A673 (cell line): ENCODE measurements at regions of chr15 and their contacts with region 1.

Region 1: DNA sequence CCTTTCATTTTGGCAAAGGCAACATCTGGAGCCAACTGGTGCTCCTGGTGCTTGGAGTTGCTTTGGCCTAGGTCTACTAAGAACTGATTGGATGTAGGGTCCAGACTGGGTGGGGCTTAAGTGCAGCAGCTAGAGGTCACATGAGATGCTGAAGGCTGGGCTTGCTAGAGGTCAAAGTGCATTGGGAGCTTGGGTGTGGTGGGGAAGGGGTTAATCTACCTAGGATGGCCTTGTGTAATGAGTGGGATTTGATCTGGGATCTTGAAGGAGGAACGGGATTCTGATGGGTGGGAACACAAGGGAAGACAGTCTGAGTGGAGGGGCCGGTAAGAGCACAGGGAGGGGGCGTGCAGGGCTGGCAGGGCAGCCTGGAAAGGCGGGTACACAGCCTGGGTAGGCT is 125.5 kb downstream of the RAB11A start:
- DNase-seq: no peak
- H3K4me3 ChIP-seq: no peak overlapping the region
- H3K27ac ChIP-seq: no peak overlapping the region
- H3K4me1 ChIP-seq: no peaks in the 10 kb centered on the region
- H3K27me3 ChIP-seq: peaks cover 62% of the 10 kb centered on the region
- CTCF ChIP-seq: no peak

Region 2: GRCh38 chr15:65558336-65558735 is 436.5 kb before region 1 on chr15:
- CTCF ChIA-PET with region 1: no interaction called
- POLR2A ChIA-PET with region 1: no interaction called
- intact Hi-C with region 1: no loop called
- DNase-seq: no peak
- H3K4me3 ChIP-seq: no peak overlapping the region
- H3K27ac ChIP-seq: no peak overlapping the region
- H3K4me1 ChIP-seq: no peaks in the 10 kb centered on the region
- H3K27me3 ChIP-seq: no peaks in the 10 kb centered on the region
- CTCF ChIP-seq: no peak

Region 3: GRCh38 chr15:65571971-65572370 is 422.9 kb before region 1 on chr15:
- CTCF ChIA-PET with region 1: no interaction called
- POLR2A ChIA-PET with region 1: no interaction called
- intact Hi-C with region 1: no loop called
- DNase-seq: no peak
- H3K4me3 ChIP-seq: no peak overlapping the region
- H3K27ac ChIP-seq: no peak overlapping the region
- H3K4me1 ChIP-seq: no peaks in the 10 kb centered on the region
- H3K27me3 ChIP-seq: no peaks in the 10 kb centered on the region
- CTCF ChIP-seq: no peak

Region 4: GRCh38 chr15:65675551-65675950 is 319.3 kb before region 1 on chr15:
- CTCF ChIA-PET with region 1: no interaction called
- POLR2A ChIA-PET with region 1: interaction called, 17 read pairs
- intact Hi-C with region 1: no loop called
- DNase-seq: no peak
- H3K4me3 ChIP-seq: no peak overlapping the region
- H3K27ac ChIP-seq: no peak overlapping the region
- H3K4me1 ChIP-seq: no peaks in the 10 kb centered on the region
- H3K27me3 ChIP-seq: no peaks in the 10 kb centered on the region
- CTCF ChIP-seq: no peak

Region 5: DNA sequence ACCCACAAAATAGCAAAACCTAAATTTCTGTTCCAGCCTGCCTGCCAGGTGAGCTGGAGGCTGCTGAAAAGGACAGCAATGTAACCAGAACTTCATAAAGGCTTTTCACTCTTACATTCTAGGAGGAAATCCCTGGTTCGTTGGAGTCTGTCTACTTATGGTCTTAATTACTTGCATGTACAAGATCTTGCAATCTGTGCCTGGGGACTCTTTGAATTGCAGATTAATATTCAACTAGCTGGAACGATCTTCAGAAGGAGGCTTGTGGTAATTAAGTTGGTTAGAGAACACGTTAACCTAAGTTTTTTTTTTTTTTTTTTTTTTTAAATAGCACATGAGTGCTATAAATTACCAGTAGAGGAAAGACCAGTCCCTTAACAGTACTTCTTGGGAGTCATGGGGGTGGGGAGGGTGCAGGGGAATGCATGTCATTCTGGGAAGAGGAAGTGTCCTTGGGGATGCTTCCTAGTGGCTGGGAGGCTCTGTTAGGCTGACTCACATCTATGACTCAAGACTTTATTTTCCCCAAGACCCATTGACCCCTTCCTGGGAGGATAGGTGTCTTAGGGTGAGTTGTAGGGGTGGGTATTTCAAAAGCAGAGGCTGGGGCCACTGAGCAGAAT is 14.2 kb after region 1 on chr15:
- CTCF ChIA-PET with region 1: no interaction called
- POLR2A ChIA-PET with region 1: no interaction called
- intact Hi-C with region 1: no loop called
- DNase-seq: peak; percentile 24
- H3K4me3 ChIP-seq: no peak overlapping the region
- H3K27ac ChIP-seq: no peak overlapping the region
- H3K4me1 ChIP-seq: no peaks in the 10 kb centered on the region
- H3K27me3 ChIP-seq: peaks cover 2% of the 10 kb centered on the region
- CTCF ChIP-seq: no peak

Region 6: DNA sequence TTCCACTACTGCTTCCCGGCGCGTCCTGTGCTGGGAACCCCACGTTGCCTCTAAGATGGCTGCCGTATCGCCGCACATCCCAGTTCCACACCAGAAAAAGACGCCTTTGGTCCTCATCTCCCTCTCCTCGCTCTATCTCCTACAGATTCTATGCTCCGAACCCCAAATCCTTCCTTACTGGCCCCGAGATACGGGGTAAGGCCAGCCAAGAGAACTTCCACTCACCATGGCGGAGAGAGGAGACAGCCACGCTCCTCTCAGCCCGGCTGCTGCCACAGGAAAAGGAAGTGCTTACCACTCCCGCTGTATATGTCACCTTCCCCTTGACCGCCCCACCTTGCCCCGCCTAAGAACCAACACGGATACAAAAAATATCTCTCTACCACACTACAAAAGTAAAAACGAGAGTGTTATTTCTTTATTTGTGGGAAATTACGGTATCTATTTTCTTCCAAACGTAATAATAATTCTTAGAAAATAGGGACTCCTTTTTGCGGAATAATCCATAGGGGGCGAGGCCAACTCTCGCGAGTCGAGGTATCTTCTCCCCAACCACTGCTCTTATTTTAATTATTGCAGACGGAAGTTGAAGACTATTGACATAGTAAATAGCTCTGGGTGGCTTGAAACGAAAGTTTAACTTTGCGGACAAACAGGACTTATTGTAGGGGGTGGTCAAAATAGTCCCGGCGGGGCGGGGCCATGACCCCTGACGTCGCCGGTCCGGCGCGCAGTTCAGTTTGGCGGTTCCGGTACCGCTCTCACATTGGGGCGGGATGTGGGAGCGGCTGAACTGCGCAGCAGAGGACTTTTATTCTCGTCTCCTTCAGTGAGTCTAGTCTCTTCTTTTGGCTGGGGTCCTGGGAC is 510.0 kb after region 1 on chr15 and contains the starts of genes RPL4 and ZWILCH:
- CTCF ChIA-PET with region 1: no interaction called
- POLR2A ChIA-PET with region 1: no interaction called
- intact Hi-C with region 1: no loop called
- DNase-seq: peak; percentile 86
- H3K4me3 ChIP-seq: peak within 1 kb of the TSS; percentile 72
- H3K27ac ChIP-seq: peak within 1 kb of the TSS; percentile 93
- H3K4me1 ChIP-seq: peaks cover 10% of the 10 kb centered on the region
- H3K27me3 ChIP-seq: no peaks in the 10 kb centered on the region
- CTCF ChIP-seq: no peak
- total RNA-seq, gene RPL4: 2,773 and 2,830 TPM in 2 replicates
- total RNA-seq, gene ZWILCH: 32.4 and 36.3 TPM in 2 replicates